Activated CD4-positive, alpha-beta T cell treated with anti-CD3 and anti-CD28 coated beads, Interleukin-2, amount 10 ng/mL, durations not matched to agents 24 days and 14 days (primary cell): ENCODE measurements at regions of chr16 and their contacts with region 1.

Region 1: DNA sequence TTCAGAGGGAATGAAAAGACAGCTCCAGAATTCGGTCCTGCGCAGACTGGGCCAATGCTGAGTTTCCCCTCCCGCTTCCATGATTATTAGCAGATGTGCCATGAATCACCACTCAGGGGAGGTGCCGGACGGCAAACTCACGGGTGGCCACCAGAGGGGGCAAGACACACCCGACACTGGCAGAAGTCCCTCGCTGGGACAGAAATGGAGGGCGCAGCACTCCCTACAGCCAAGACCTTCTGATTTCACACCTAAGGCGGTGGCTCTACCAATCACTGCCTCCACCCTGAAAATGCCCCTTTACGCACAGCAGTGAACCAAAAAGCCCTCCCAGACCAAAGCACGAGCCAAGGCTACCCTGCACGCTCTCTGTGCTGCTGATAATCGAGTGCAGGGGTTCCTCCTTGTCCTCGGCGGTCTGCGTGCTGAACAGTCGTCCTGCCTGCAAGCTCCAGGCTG is 26.8 kb downstream of the TRAP1 start:
- DNase-seq: peak; percentile 94
- H3K4me3 Mint-ChIP-seq: peak overlapping the region; percentile 25
- H3K27ac Mint-ChIP-seq: peak overlapping the region; percentile 45
- H3K4me1 Mint-ChIP-seq: peaks cover 7% of the 10 kb centered on the region
- H3K27me3 Mint-ChIP-seq: no peaks in the 10 kb centered on the region

Region 2: GRCh38 chr16:3717235-3718018 is 26.9 kb after region 1 on chr16 and contains the start of gene TRAP1:
- intact Hi-C with region 1: loop called (anchors 2 kb)
- DNase-seq: peak; percentile 97
- H3K4me3 Mint-ChIP-seq: peak within 1 kb of the TSS; percentile 94
- H3K27ac Mint-ChIP-seq: peak within 1 kb of the TSS; percentile 94
- H3K4me1 Mint-ChIP-seq: peaks cover 30% of the 10 kb centered on the region
- H3K27me3 Mint-ChIP-seq: no peaks in the 10 kb centered on the region
- total RNA-seq, gene TRAP1: 394 and 421 TPM in 2 replicates

Region 3: DNA sequence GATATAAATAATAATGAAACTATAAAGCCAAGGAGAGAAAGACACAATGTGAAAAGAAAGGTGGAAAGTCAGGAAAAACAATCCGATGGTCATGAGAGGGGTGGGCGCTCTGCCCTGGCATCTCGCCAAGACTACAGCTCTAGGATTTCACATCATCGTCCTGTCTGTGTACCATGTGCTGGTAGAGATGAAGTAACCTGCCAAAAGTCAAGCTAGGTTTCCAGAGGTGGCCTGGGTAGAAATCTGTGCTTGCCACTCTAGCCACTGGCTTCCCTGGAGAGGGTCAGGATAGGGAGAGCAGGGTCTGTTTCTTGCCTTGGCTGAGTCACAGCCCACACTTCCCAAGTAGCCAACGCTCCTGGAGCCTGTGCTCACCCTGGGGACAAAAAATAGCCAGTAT is 57.8 kb after region 1 on chr16:
- intact Hi-C with region 1: loop called (anchors 2 kb)
- DNase-seq: no peak
- H3K4me3 Mint-ChIP-seq: no peak overlapping the region
- H3K27ac Mint-ChIP-seq: no peak overlapping the region
- H3K4me1 Mint-ChIP-seq: peaks cover 12% of the 10 kb centered on the region
- H3K27me3 Mint-ChIP-seq: no peaks in the 10 kb centered on the region

Region 4: DNA sequence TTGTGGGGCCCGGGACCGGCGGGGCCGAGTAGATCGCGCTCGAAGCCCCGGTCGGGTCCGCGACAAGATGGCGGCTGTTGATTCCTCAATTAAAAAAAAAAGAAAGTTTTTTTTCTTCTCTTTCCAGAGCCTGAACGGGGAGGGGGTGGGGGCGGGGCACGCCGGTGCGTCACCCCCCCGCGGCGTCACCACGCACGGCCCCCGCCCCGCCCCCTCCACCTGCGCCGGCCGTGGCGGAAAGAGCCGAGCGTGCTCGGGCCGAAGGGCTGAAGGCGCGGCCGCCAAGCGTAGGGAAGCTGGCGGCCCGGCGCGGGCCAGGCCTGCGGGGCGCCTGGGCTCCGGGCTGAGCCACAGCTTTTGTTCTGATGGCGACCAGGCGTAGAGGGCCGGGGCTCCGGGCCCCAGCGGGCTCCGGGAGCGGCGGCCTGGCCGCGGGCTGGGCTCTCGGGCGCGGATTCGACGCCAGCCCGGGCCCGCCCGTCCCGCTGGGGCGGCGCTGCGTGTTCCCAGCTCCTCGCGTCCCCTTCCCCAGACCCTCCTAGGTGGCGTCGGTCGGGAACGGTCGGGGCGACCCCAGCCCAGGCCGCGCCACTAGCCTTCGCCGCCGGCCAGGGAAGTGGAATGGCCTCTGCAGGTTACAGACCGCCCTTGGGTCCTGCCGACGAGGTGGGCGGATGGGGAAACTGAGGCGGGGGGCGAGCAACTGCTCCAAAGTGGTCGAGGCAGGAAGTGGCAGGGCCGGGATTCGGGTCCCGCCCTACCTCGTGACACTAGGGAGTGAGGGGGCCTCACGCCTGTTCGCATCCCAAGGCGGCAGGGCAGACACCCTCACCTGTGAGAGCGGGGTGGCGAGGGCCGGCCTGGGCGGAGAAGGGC is 190.4 kb after region 1 on chr16 and contains the start of gene CREBBP:
- intact Hi-C with region 1: loop called (anchors 1 kb)
- DNase-seq: peak; percentile 97
- H3K4me3 Mint-ChIP-seq: peak within 1 kb of the TSS; percentile 84
- H3K27ac Mint-ChIP-seq: peak within 1 kb of the TSS; percentile 90
- H3K4me1 Mint-ChIP-seq: peaks cover 39% of the 10 kb centered on the region
- H3K27me3 Mint-ChIP-seq: peaks cover 11% of the 10 kb centered on the region
- total RNA-seq, gene CREBBP: 42.3 and 45.3 TPM in 2 replicates